ENCODE measurements at regions of chr7 and their contacts with region 1.

Region 1: DNA sequence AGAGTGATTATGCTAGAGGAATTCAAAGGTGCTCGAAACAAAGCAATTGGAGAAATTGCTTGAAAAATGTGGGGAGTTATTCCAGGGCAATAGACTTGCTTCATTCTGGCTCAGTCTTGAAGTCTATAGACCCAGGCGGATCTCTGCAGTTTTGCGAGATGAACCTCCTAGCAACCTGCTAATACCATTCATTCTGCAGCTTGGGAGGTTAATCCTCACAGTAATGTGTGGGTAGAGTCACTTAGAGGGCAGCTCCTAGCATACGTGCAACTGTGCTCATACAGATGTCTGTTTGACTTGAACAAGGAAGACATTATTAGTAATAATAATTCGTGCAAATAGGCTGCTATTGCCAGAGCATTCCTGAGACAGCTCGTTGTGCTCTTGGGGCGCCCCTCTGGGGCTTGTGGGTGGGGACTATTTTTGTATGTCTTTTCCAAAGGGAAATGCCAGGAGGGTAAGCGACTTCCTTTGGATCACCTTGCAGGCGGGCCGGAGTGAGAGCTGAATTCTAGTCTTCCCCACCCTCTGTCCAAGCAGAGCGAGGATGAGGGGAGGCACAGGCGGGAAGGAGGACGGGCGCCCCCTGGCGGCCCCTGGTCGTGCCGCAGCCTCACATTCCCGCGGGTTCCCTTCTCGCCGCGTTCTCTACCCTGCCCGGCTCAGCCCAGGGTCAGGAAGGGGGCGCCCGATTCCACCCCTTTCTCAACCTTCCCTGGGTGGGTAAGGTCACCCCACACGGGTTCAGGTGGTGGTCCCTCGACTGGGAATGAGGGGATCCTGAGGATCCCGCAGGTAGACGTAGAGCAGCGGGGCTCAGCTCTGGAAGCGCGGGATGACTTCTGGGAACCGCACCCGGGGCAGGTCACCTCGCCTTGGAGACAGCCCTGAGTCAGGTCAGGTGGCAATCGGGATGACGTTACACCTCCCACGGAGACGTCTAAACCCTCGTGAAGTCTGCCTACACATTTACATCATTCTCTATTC is 241.5 kb downstream of the PHTF2 start:
- DNase-seq: peak; percentile 23
- H3K4me3 ChIP-seq: no peak overlapping the region
- H3K27ac ChIP-seq: no peak overlapping the region
- H3K4me1 ChIP-seq: no peaks in the 10 kb centered on the region
- H3K27me3 ChIP-seq: no peaks in the 10 kb centered on the region
- CTCF ChIP-seq: peak; percentile 42 to 68 (median 64)
- EP300 ChIP-seq: no peak
- POLR2A ChIP-seq: no peak

Region 2: GRCh38 chr7:77667459-77668086 is 372.5 kb before region 1 on chr7:
- in situ Hi-C with region 1: loop called in 1 of 4 experiments (anchors 10 kb)
- intact Hi-C with region 1: no loop called
- DNase-seq: peak; percentile 35
- H3K4me3 ChIP-seq: no peak overlapping the region
- H3K27ac ChIP-seq: peak overlapping the region; percentile 53 to 82 (median 70)
- H3K4me1 ChIP-seq: peaks cover 5 to 52% (median 22%) of the 10 kb centered on the region in 4 donors
- H3K27me3 ChIP-seq: no peaks in the 10 kb centered on the region
- CTCF ChIP-seq: no peak
- EP300 ChIP-seq: no peak
- POLR2A ChIP-seq: no peak

Region 3: DNA sequence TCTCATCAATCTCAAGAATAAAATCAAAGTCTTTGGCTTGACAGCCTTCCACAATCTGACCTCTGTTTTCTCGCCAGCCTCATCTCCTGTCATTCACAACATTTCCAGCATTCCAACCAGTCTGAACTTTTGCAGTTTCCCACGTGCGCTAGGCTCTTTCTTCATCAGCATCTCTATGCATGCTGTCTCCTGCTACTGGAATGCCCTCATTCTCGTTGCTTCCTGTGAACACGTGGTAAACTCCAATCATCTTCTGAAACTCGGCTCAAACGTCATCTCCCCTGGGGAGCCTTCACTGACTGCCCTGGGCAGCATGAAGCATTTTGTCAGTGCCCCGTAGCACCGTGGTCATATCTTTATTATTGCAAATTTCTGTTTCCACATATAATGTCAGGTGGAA is 356.1 kb before region 1 on chr7:
- in situ Hi-C with region 1: no loop called
- intact Hi-C with region 1: no loop called
- DNase-seq: no peak
- H3K4me3 ChIP-seq: no peak overlapping the region
- H3K27ac ChIP-seq: peak overlapping the region; percentile 68 to 72 (median 70)
- H3K4me1 ChIP-seq: peaks cover 18 to 65% (median 49%) of the 10 kb centered on the region in 4 donors
- H3K27me3 ChIP-seq: no peaks in the 10 kb centered on the region
- CTCF ChIP-seq: no peak
- EP300 ChIP-seq: no peak
- POLR2A ChIP-seq: no peak

Region 4: DNA sequence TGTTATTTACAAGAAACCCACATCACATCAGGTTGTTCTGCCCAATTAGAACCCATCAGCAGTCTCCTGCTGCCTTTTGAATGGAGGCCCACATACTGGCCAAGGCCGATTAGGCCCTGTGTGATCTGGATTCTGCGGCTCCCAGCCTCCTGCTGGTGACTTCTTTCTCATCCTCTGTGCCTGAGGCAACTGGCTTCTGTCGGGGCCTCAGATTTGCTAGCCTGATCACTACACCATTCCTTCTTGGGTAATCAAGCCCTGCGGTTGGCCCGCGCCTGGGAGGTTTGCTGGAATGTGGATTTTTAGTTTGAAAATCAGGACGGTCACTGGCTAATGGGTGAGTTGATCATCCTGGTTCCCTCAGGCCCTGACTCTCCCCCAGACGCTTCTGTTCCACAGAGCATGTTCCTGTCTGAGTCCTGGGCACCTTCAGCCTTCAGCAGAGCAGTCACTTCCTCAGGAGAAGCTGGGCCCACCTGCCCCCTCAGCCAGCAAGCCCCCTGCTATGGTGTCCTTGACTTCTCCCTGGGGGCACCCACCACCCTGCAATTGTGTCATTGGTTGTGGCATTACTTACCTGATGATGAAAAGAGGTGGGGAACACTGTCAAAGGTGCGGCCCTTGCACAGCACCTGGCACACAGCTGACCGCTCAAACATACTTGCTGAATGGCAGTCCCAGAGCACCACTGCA is 33.9 kb before region 1 on chr7:
- in situ Hi-C with region 1: no loop called
- intact Hi-C with region 1: no loop called
- DNase-seq: no peak
- H3K4me3 ChIP-seq: no peak overlapping the region
- H3K27ac ChIP-seq: no peak overlapping the region
- H3K4me1 ChIP-seq: no peaks in the 10 kb centered on the region
- H3K27me3 ChIP-seq: no peaks in the 10 kb centered on the region
- CTCF ChIP-seq: no peak
- EP300 ChIP-seq: no peak
- POLR2A ChIP-seq: no peak

Region 5: GRCh38 chr7:78062214-78062613 is 22.1 kb after region 1 on chr7:
- in situ Hi-C with region 1: no loop called
- intact Hi-C with region 1: no loop called
- DNase-seq: no peak
- H3K4me3 ChIP-seq: no peak overlapping the region
- H3K27ac ChIP-seq: no peak overlapping the region
- H3K4me1 ChIP-seq: no peaks in the 10 kb centered on the region
- H3K27me3 ChIP-seq: no peaks in the 10 kb centered on the region
- CTCF ChIP-seq: no peak
- EP300 ChIP-seq: no peak
- POLR2A ChIP-seq: no peak

Measured in transverse colon (tissue), 4 donors.